CD8-positive, alpha-beta T cell (primary cell): ENCODE measurements at regions of chr17 and their contacts with region 1.

Region 1: GRCh38 chr17:56913864-56914640 is at the start of gene TRIM25:
- DNase-seq: peak; percentile 74 to 93 (median 88)
- ATAC-seq: peak; percentile 88
- H3K4me3 ChIP-seq: peak within 1 kb of the TSS; percentile 97 to 99
- H3K4me3 Mint-ChIP-seq: peak within 1 kb of the TSS; percentile 96
- H3K27ac ChIP-seq: peak within 1 kb of the TSS; percentile 78 to 83
- H3K27ac Mint-ChIP-seq: peak within 1 kb of the TSS; percentile 94
- H3K4me1 ChIP-seq: peaks cover 25% of the 10 kb centered on the region
- H3K4me1 Mint-ChIP-seq: peaks cover 41% of the 10 kb centered on the region
- H3K27me3 ChIP-seq: no peaks in the 10 kb centered on the region
- H3K27me3 Mint-ChIP-seq: no peaks in the 10 kb centered on the region
- CTCF ChIP-seq: no peak
- total RNA-seq, gene TRIM25: 28.6 to 30.8 TPM

Region 2: DNA sequence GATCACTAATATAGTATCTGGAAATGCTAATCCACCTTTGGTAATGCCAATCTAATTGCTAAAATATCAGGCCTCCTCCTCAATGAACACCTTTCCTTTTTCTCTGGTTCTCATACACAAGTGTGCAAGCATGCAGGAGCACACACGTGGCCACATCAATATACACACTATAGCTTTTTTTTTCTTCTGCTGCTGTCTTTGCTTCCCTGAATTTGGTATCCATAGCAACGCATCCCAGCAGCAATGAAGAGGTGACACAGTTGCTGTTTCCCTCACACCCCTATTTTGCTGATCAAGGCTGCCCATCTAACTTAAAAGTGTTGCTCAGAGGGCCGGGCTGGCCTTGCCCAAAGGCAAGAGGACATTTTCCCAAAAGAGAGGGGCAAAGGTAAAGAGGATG is 305.1 kb before region 1 on chr17:
- CTCF ChIA-PET with region 1: no interaction called
- POLR2A ChIA-PET with region 1: no interaction called
- intact Hi-C with region 1: no loop called
- DNase-seq: no peak
- ATAC-seq: no peak
- H3K4me3 ChIP-seq: no peak overlapping the region
- H3K4me3 Mint-ChIP-seq: no peak overlapping the region
- H3K27ac ChIP-seq: no peak overlapping the region
- H3K27ac Mint-ChIP-seq: no peak overlapping the region
- H3K4me1 ChIP-seq: peaks cover 13% of the 10 kb centered on the region
- H3K4me1 Mint-ChIP-seq: peaks cover 31% of the 10 kb centered on the region
- H3K27me3 ChIP-seq: peaks cover 0 to 2% of the 10 kb centered on the region in 2 experiments
- H3K27me3 Mint-ChIP-seq: no peaks in the 10 kb centered on the region
- CTCF ChIP-seq: no peak

Region 3: DNA sequence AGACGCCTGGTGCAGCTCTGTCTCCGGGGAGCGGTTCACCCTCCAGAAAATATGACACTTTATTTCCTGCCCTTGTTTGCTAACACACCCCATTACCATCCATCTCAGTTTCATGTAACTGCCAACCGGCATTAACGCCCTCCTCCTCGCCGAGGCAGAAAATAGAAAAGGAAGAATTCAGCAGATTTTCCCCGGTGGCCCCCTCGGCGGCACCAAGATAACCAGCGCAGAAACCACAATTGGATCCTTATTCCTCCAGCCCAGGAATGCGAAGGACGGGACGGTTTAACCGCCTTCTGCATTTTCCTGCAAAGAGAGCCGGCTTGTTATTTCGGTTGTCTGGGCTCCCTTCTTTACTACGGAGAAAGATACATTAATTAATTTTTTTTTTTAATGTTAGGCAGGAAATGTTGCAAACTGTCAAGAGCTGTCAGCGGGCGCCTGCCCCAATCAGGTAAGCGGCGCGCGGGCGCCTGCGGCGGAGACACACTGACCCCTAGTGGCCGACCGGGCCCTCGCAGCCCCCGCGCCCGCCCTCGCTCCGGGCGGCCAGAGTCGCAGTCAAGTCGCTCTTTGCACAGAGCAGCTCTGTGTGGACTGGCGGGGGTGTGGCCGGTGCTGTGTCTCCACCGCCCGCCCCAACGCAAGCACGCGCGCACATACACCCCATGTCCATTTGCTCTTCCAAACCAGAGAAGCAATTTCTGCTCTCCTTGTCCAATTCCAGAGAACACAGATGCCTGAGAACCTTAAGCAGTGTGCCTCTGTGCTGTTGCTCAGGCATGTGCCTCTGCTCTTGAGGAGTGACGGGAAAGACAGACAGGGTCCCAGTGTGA is 133.9 kb before region 1 on chr17:
- CTCF ChIA-PET with region 1: no interaction called
- POLR2A ChIA-PET with region 1: no interaction called
- intact Hi-C with region 1: loop called in 1 of 2 experiments (anchors 1 kb)
- DNase-seq: peak; percentile 77 to 93 (median 84)
- ATAC-seq: peak; percentile 97
- H3K4me3 ChIP-seq: peak overlapping the region; percentile 44 to 61
- H3K4me3 Mint-ChIP-seq: peak overlapping the region; percentile 93
- H3K27ac ChIP-seq: peak overlapping the region; percentile 63 to 71
- H3K27ac Mint-ChIP-seq: peak overlapping the region; percentile 95
- H3K4me1 ChIP-seq: peaks cover 14% of the 10 kb centered on the region
- H3K4me1 Mint-ChIP-seq: peaks cover 18% of the 10 kb centered on the region
- H3K27me3 ChIP-seq: no peaks in the 10 kb centered on the region
- H3K27me3 Mint-ChIP-seq: no peaks in the 10 kb centered on the region
- CTCF ChIP-seq: peak; percentile 99

Region 4: GRCh38 chr17:56819431-56820145 is 94.5 kb before region 1 on chr17:
- CTCF ChIA-PET with region 1: interaction called, 18 read pairs
- POLR2A ChIA-PET with region 1: interaction called, 4 read pairs
- intact Hi-C with region 1: no loop called
- DNase-seq: peak; percentile 37 to 83 (median 72)
- ATAC-seq: peak; percentile 94
- H3K4me3 ChIP-seq: no peak overlapping the region
- H3K4me3 Mint-ChIP-seq: no peak overlapping the region
- H3K27ac ChIP-seq: no peak overlapping the region
- H3K27ac Mint-ChIP-seq: no peak overlapping the region
- H3K4me1 ChIP-seq: no peaks in the 10 kb centered on the region
- H3K4me1 Mint-ChIP-seq: peaks cover 4% of the 10 kb centered on the region
- H3K27me3 ChIP-seq: no peaks in the 10 kb centered on the region
- H3K27me3 Mint-ChIP-seq: no peaks in the 10 kb centered on the region
- CTCF ChIP-seq: peak; percentile 82

Region 5: GRCh38 chr17:56891784-56892183 is 22.3 kb before region 1 on chr17:
- CTCF ChIA-PET with region 1: interaction called, 17 read pairs
- POLR2A ChIA-PET with region 1: interaction called, 4 read pairs
- intact Hi-C with region 1: loop called in 1 of 2 experiments (anchors 1 kb)
- DNase-seq: peak; percentile 25 to 73 (median 65)
- ATAC-seq: peak; percentile 74
- H3K4me3 ChIP-seq: no peak overlapping the region
- H3K4me3 Mint-ChIP-seq: no peak overlapping the region
- H3K27ac ChIP-seq: no peak overlapping the region
- H3K27ac Mint-ChIP-seq: no peak overlapping the region
- H3K4me1 ChIP-seq: no peaks in the 10 kb centered on the region
- H3K4me1 Mint-ChIP-seq: peaks cover 2% of the 10 kb centered on the region
- H3K27me3 ChIP-seq: no peaks in the 10 kb centered on the region
- H3K27me3 Mint-ChIP-seq: no peaks in the 10 kb centered on the region
- CTCF ChIP-seq: peak; percentile 32

Region 6: DNA sequence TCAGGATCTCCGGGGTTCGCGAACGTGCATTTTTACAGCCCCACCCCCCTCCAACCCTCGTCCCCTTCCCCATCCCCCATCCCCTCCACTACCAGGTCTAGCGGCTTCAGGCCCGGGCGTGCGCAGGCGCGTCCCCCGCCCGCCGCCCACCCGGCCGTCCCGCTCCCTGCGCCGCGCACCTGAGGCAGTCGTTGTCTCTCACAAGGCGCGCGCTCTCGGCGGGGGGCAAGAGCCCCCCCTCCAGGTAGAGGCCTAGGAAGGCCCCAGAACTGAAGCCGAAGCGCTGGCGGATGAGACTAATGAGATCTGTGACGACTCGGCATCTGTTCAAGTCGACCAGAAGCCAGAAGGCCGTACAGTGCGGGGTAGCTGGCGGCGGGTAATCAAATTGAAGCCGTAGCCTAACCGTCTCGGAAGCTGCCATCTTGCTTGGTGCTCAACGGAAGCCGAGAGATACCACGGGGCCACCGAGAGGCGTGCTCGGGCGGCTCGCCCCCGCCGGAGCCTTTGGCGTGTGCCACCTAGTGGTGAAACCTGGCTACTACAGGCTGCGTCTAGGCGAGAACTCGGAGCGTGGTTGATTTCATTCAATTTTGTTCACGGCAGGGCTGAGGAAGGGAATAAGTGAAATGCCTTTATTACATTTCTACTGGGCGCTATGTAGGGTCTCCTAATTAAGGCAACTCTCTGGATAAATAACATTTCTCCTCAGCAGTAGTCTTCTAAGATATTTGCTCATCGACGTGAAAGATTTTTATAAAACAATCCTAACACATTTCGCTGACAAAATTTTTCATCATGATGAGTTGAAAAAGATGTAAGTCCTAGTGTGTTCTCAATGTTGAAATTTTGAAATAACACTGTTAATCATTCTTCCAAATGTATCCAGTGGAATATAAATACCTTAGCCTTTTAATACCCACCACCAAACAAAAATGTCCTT is 46.8 kb after region 1 on chr17 and contains the start of gene COIL:
- CTCF ChIA-PET with region 1: no interaction called
- POLR2A ChIA-PET with region 1: no interaction called
- intact Hi-C with region 1: loop called (anchors 1 kb)
- DNase-seq: peak; percentile 85 to 96 (median 93)
- ATAC-seq: peak; percentile 98
- H3K4me3 ChIP-seq: peak within 1 kb of the TSS; percentile 65 to 89
- H3K4me3 Mint-ChIP-seq: peak within 1 kb of the TSS; percentile 89
- H3K27ac ChIP-seq: peak within 1 kb of the TSS; percentile 78 to 79
- H3K27ac Mint-ChIP-seq: peak within 1 kb of the TSS; percentile 96
- H3K4me1 ChIP-seq: peaks cover 22% of the 10 kb centered on the region
- H3K4me1 Mint-ChIP-seq: peaks cover 25% of the 10 kb centered on the region
- H3K27me3 ChIP-seq: no peaks in the 10 kb centered on the region
- H3K27me3 Mint-ChIP-seq: no peaks in the 10 kb centered on the region
- CTCF ChIP-seq: peak; percentile 99
- total RNA-seq, gene COIL: 24.1 to 24.3 TPM

Region 7: GRCh38 chr17:56977673-56978395 is 63.8 kb after region 1 on chr17 and contains the start of gene SCPEP1:
- CTCF ChIA-PET with region 1: no interaction called
- POLR2A ChIA-PET with region 1: interaction called, 10 read pairs
- intact Hi-C with region 1: no loop called
- DNase-seq: peak; percentile 67 to 89 (median 80)
- ATAC-seq: peak; percentile 98
- H3K4me3 ChIP-seq: peak within 1 kb of the TSS; percentile 73 to 79
- H3K4me3 Mint-ChIP-seq: peak within 1 kb of the TSS; percentile 93
- H3K27ac ChIP-seq: peak within 1 kb of the TSS; percentile 33 to 56
- H3K27ac Mint-ChIP-seq: peak within 1 kb of the TSS; percentile 90
- H3K4me1 ChIP-seq: peaks cover 12% of the 10 kb centered on the region
- H3K4me1 Mint-ChIP-seq: peaks cover 19% of the 10 kb centered on the region
- H3K27me3 ChIP-seq: no peaks in the 10 kb centered on the region
- H3K27me3 Mint-ChIP-seq: peaks cover 2% of the 10 kb centered on the region
- CTCF ChIP-seq: no peak
- total RNA-seq, gene SCPEP1: 22.9 to 28.4 TPM

Region 8: GRCh38 chr17:57084802-57085447 is 170.9 kb after region 1 on chr17 and contains the start of gene AKAP1:
- CTCF ChIA-PET with region 1: no interaction called
- POLR2A ChIA-PET with region 1: interaction called, 3 read pairs
- intact Hi-C with region 1: loop called in 1 of 2 experiments (anchors 1 kb)
- DNase-seq: peak; percentile 89 to 98 (median 94)
- ATAC-seq: peak; percentile 86
- H3K4me3 ChIP-seq: peak within 1 kb of the TSS; percentile 88 to 95
- H3K4me3 Mint-ChIP-seq: peak within 1 kb of the TSS; percentile 91
- H3K27ac ChIP-seq: peak within 1 kb of the TSS; percentile 87 to 93
- H3K27ac Mint-ChIP-seq: peak within 1 kb of the TSS; percentile 93
- H3K4me1 ChIP-seq: peaks cover 12% of the 10 kb centered on the region
- H3K4me1 Mint-ChIP-seq: peaks cover 38% of the 10 kb centered on the region
- H3K27me3 ChIP-seq: no peaks in the 10 kb centered on the region
- H3K27me3 Mint-ChIP-seq: no peaks in the 10 kb centered on the region
- CTCF ChIP-seq: no peak
- total RNA-seq, gene AKAP1: 20.6 to 23.5 TPM